ENCODE measurements at regions of chr14 and their contacts with region 1.

Region 1: GRCh38 chr14:35292051-35292769 is at the start of gene PSMA6:
- DNase-seq: peak; percentile 99
- H3K4me3 Mint-ChIP-seq: peak within 1 kb of the TSS; percentile 99
- H3K27ac Mint-ChIP-seq: peak within 1 kb of the TSS; percentile 96
- H3K4me1 Mint-ChIP-seq: peaks cover 44% of the 10 kb centered on the region
- H3K27me3 Mint-ChIP-seq: no peaks in the 10 kb centered on the region
- total RNA-seq, gene PSMA6: 396 and 397 TPM in 2 replicates

Region 2: GRCh38 chr14:35121887-35122695 is 170.1 kb before region 1 on chr14 and contains the starts of genes PPP2R3C and PRORP:
- intact Hi-C with region 1: loop called (anchors 1 kb)
- DNase-seq: peak; percentile 88
- H3K4me3 Mint-ChIP-seq: peak within 1 kb of the TSS; percentile 96
- H3K27ac Mint-ChIP-seq: peak within 1 kb of the TSS; percentile 100
- H3K4me1 Mint-ChIP-seq: peaks cover 41% of the 10 kb centered on the region
- H3K27me3 Mint-ChIP-seq: no peaks in the 10 kb centered on the region
- total RNA-seq, gene PPP2R3C: 48.1 and 49.7 TPM in 2 replicates
- total RNA-seq, gene PRORP: 37.0 and 41.3 TPM in 2 replicates

Region 3: GRCh38 chr14:35201066-35201465 is 91.1 kb before region 1 on chr14:
- intact Hi-C with region 1: loop called (anchors 2 kb)
- DNase-seq: no peak
- H3K4me3 Mint-ChIP-seq: peak overlapping the region; percentile 22
- H3K27ac Mint-ChIP-seq: peak overlapping the region; percentile 54
- H3K4me1 Mint-ChIP-seq: peaks cover 45% of the 10 kb centered on the region
- H3K27me3 Mint-ChIP-seq: no peaks in the 10 kb centered on the region

Region 4: DNA sequence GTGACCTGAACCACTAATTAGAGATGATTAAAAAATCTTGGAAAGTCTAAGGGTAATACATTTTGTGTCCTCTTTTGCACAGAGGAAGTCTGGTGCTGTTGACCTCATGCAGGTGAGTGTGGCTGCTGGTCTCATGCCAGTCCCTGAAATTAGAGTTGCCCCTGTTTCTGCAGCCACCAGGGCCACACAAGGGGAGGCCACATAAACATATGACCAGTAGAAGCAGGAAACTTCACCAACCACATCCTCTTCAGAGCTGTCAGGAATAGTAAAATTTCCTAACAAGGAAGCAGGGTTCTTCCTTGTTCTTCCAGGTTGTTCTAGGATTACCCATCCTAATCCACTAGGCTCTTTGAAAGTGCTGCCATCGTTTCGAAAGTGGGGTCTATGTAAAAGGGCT is 28.3 kb after region 1 on chr14:
- intact Hi-C with region 1: loop called (anchors 2 kb)
- DNase-seq: no peak
- H3K4me3 Mint-ChIP-seq: no peak overlapping the region
- H3K27ac Mint-ChIP-seq: no peak overlapping the region
- H3K4me1 Mint-ChIP-seq: peaks cover 4% of the 10 kb centered on the region
- H3K27me3 Mint-ChIP-seq: no peaks in the 10 kb centered on the region

Region 5: DNA sequence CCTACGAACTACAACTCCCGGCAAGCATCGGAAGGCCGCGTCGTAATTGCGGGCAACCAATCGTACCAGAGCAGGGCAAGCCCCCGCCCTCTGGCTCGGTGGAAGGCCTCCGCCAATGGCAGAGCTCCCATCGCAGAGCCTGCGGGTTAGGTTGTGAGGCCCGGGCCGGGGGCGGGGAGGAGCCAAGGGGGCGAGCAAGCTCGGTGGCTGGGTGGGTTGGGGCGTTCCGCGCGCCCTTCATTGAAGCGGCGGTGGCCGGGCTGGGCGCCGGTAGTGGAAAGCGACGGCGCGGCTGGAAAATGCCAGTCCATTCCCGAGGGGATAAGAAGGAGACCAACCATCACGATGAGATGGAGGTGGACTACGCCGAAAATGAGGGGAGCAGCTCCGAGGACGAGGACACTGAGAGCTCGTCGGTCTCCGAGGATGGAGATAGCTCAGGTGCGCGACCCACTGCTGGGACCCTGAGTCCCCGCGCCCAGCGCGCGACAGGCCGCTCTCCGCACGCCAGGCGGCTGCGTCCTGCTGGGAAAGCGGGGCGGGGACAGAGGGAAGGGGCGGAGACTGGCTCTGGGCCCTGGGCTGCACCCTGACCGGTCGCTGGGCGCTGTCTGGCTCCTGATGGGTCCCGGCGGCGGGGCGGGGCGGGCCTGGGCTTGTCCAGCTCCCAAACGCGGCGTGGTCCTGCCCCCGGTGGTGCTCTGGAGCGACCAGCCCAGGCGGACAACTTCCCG is 534.2 kb after region 1 on chr14 and contains the start of gene BRMS1L:
- intact Hi-C with region 1: loop called (anchors 2 kb)
- DNase-seq: peak; percentile 96
- H3K4me3 Mint-ChIP-seq: peak within 1 kb of the TSS; percentile 84
- H3K27ac Mint-ChIP-seq: peak within 1 kb of the TSS; percentile 90
- H3K4me1 Mint-ChIP-seq: peaks cover 21% of the 10 kb centered on the region
- H3K27me3 Mint-ChIP-seq: no peaks in the 10 kb centered on the region
- total RNA-seq, gene BRMS1L: 5.3 and 6.1 TPM in 2 replicates

Measured in activated T-helper 2 cell treated with anti-CD3 and anti-CD28 coated beads, Interferon-gamma antibody, Interleukin-2, Interleukin-4, amounts not matched to agents 10 μg/mL and 5 μg/mL and 100 μg/mL, durations not matched to agents 14 hours and 24 hours and 36 hours (primary cell).